AG04450 (cell line): ENCODE measurements at regions of chr2 and their contacts with region 1.

Region 1: GRCh38 chr2:165203689-165204559 is at the start of gene SCN3A:
- DNase-seq: peak; percentile 7
- H3K4me3 ChIP-seq: no peak within 1 kb of the TSS
- H3K27ac ChIP-seq: no peak within 1 kb of the TSS
- H3K27me3 ChIP-seq: no peaks in the 10 kb centered on the region
- CTCF ChIP-seq: peak; percentile 80
- polyA plus RNA-seq, gene SCN3A: 0.11 and 0.17 TPM in 2 replicates

Region 2: DNA sequence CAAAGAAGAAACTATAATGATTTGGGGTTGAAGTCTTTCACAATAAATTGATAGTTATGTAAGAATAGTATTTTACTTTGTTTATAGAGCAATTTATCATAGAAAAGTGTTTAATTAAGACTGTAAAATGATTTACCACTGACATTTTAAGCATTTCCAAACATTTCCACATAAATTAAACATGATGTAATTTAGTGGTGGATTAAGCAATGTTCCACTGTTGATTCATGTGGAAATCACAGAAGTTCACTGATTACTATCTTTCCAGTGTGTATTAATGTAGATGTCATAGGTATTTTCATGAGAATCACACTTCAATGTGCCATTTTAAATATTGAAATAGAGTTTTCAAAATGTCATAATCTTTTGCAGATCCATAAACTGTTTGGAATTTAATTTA is 542.6 kb before region 1 on chr2:
- CTCF ChIA-PET with region 1: no interaction called
- POLR2A ChIA-PET with region 1: no interaction called
- DNase-seq: no peak
- H3K4me3 ChIP-seq: no peak overlapping the region
- H3K27ac ChIP-seq: no peak overlapping the region
- H3K27me3 ChIP-seq: no peaks in the 10 kb centered on the region
- CTCF ChIP-seq: no peak

Region 3: DNA sequence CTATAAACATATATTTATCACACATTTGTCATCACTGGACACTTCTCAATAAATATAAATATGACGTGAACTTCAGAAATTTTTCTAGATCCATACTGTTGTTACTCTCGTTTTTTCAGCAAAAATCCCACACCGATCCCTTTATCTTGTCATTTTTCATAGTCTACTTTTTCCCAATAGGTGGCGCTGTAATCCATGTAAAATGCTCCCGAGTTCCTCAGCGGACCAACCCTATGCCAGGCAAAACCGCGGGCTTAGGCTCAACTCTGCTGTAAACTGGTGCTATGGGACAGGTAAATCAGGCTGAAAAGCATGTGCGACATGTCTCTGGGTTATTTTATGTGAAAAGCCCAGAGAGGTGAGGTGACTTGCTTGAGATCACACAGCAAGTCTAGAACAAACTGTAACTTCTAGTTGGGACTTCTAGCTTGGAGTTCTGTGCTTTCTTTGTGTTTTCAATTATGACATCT is 466.3 kb before region 1 on chr2:
- CTCF ChIA-PET with region 1: interaction called, 16 read pairs
- POLR2A ChIA-PET with region 1: no interaction called
- DNase-seq: peak; percentile 23
- H3K4me3 ChIP-seq: no peak overlapping the region
- H3K27ac ChIP-seq: no peak overlapping the region
- H3K27me3 ChIP-seq: no peaks in the 10 kb centered on the region
- CTCF ChIP-seq: peak; percentile 79

Region 4: GRCh38 chr2:165008730-165009315 is 195.1 kb before region 1 on chr2:
- CTCF ChIA-PET with region 1: interaction called, 417 read pairs
- POLR2A ChIA-PET with region 1: no interaction called
- DNase-seq: no peak
- H3K4me3 ChIP-seq: no peak overlapping the region
- H3K27ac ChIP-seq: no peak overlapping the region
- H3K27me3 ChIP-seq: no peaks in the 10 kb centered on the region
- CTCF ChIP-seq: no peak

Region 5: GRCh38 chr2:165149439-165149838 is 54.5 kb before region 1 on chr2:
- CTCF ChIA-PET with region 1: interaction called, 11 read pairs
- POLR2A ChIA-PET with region 1: no interaction called
- DNase-seq: no peak
- H3K4me3 ChIP-seq: no peak overlapping the region
- H3K27ac ChIP-seq: no peak overlapping the region
- H3K27me3 ChIP-seq: no peaks in the 10 kb centered on the region
- CTCF ChIP-seq: no peak

Region 6: GRCh38 chr2:165182029-165182428 is 21.9 kb before region 1 on chr2:
- CTCF ChIA-PET with region 1: interaction called, 27 read pairs
- POLR2A ChIA-PET with region 1: no interaction called
- DNase-seq: no peak
- H3K4me3 ChIP-seq: no peak overlapping the region
- H3K27ac ChIP-seq: no peak overlapping the region
- H3K27me3 ChIP-seq: no peaks in the 10 kb centered on the region
- CTCF ChIP-seq: no peak

Region 7: GRCh38 chr2:165219481-165219880 is 15.6 kb after region 1 on chr2:
- CTCF ChIA-PET with region 1: interaction called, 55 read pairs
- POLR2A ChIA-PET with region 1: no interaction called
- DNase-seq: no peak
- H3K4me3 ChIP-seq: no peak overlapping the region
- H3K27ac ChIP-seq: no peak overlapping the region
- H3K27me3 ChIP-seq: no peaks in the 10 kb centered on the region
- CTCF ChIP-seq: no peak

Region 8: DNA sequence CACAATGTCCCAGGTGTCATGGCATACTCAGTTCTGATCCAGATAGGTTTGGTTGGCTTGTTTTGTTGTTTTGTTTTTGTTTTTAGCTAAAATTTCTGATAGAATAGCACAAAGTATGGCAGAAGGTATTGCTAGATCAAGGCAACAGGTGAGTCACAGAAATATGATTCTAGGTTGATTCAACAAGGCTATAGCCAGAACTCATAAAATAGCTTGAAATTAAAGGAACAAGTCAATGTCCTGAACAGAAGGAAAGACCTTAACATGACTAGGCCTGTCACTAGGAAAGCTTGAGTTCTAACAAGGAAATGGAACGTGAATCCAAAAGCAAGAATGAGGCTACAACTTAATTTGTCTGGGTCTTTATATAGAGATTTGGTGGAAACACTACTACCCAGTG is 433.0 kb after region 1 on chr2:
- CTCF ChIA-PET with region 1: interaction called, 10 read pairs
- POLR2A ChIA-PET with region 1: no interaction called
- DNase-seq: no peak
- H3K4me3 ChIP-seq: no peak overlapping the region
- H3K27ac ChIP-seq: no peak overlapping the region
- H3K27me3 ChIP-seq: no peaks in the 10 kb centered on the region
- CTCF ChIP-seq: no peak

Region 9: DNA sequence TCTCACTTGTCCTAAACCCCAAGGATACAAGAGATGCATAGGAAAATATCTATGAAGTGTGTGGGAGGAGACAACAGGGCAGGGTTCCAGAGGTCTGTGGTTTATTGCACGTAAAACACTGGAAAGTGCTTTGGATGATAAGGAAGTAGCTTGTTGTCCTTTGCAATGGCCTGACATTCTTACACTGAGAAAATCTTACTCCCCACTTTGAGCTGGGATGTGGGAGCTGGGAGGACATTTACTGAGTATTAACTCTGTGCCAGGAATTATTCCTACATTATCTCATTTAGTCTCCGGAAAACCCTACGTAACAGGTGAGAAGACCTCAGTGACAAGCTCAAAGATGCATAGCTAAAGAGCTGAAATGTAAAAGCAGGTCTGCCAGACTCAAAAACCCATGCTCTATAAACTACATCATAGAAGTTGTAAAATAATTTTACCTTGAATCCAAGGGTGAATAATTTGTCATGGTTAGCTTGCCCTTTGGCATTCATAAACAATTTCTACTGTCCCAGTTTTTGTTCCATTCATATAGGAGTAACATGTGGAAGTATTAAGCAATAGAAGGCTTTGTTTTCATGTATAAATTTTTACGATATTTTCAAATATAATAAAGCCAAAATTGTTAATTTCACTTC is 599.3 kb after region 1 on chr2:
- CTCF ChIA-PET with region 1: no interaction called
- POLR2A ChIA-PET with region 1: no interaction called
- DNase-seq: peak; percentile 21
- H3K4me3 ChIP-seq: no peak overlapping the region
- H3K27ac ChIP-seq: no peak overlapping the region
- H3K27me3 ChIP-seq: no peaks in the 10 kb centered on the region
- CTCF ChIP-seq: no peak